Gastrocnemius medialis (tissue), 4 donors: ENCODE measurements at regions of chr1 and their contacts with region 1.

Region 1: GRCh38 chr1:181112071-181112929 is 23.8 kb downstream of the IER5 start:
- DNase-seq: peak; percentile 98 to 99
- ATAC-seq: peak; percentile 94 to 96
- H3K4me3 ChIP-seq: peak overlapping the region in 2 of 4 donors; percentile 4 to 31
- H3K27ac ChIP-seq: peak overlapping the region; percentile 87 to 95 (median 91)
- H3K4me1 ChIP-seq: peaks cover 28 to 32% of the 10 kb centered on the region in 2 donors
- H3K27me3 ChIP-seq: no peaks in the 10 kb centered on the region
- CTCF ChIP-seq: no peak
- POLR2A ChIP-seq: peak; percentile 60 to 78

Region 2: GRCh38 chr1:181033799-181034451 is 78.4 kb before region 1 on chr1 and contains the start of gene MR1:
- in situ Hi-C with region 1: no loop called
- intact Hi-C with region 1: no loop called
- DNase-seq: no peak
- ATAC-seq: peak; percentile 94
- H3K4me3 ChIP-seq: peak within 1 kb of the TSS; percentile 42 to 57 (median 49)
- H3K27ac ChIP-seq: peak within 1 kb of the TSS; percentile 84 to 91 (median 90)
- H3K4me1 ChIP-seq: peaks cover 13 to 17% of the 10 kb centered on the region in 2 donors
- H3K27me3 ChIP-seq: no peaks in the 10 kb centered on the region
- CTCF ChIP-seq: no peak
- POLR2A ChIP-seq: peak; percentile 21 to 55
- total RNA-seq, gene MR1: 1.6 to 3.5 (median 3.0) TPM

Region 3: GRCh38 chr1:181062836-181063428 is 49.4 kb before region 1 on chr1:
- in situ Hi-C with region 1: no loop called
- intact Hi-C with region 1: loop called (anchors 1 kb)
- DNase-seq: peak; percentile 42 to 66
- ATAC-seq: peak; percentile 65 to 73
- H3K4me3 ChIP-seq: peak overlapping the region; percentile 37 to 47 (median 42)
- H3K27ac ChIP-seq: peak overlapping the region; percentile 89 to 100 (median 94)
- H3K4me1 ChIP-seq: peaks cover 28 to 38% of the 10 kb centered on the region in 2 donors
- H3K27me3 ChIP-seq: no peaks in the 10 kb centered on the region
- CTCF ChIP-seq: no peak
- POLR2A ChIP-seq: peak in 1 of 2 donors; percentile 25